ENCODE measurements at regions of chr3 and their contacts with region 1.

Region 1: GRCh38 chr3:39383045-39383880 is at the start of gene SLC25A38:
- DNase-seq: peak; percentile 85
- H3K4me3 ChIP-seq: peak within 1 kb of the TSS; percentile 56 to 81 (median 72)
- H3K27ac ChIP-seq: peak within 1 kb of the TSS; percentile 94 to 98 (median 96)
- H3K4me1 ChIP-seq: peaks cover 10 to 45% (median 25%) of the 10 kb centered on the region in 4 donors
- H3K27me3 ChIP-seq: no peaks in the 10 kb centered on the region
- CTCF ChIP-seq: peak; percentile 17 to 55 (median 41)
- EP300 ChIP-seq: no peak
- POLR2A ChIP-seq: peak; percentile 58
- total RNA-seq, gene SLC25A38: 10.5 to 61.7 (median 40.4) TPM

Region 2: GRCh38 chr3:39107388-39108199 is 275.7 kb before region 1 on chr3 and contains the starts of genes GORASP1 and TTC21A:
- in situ Hi-C with region 1: no loop called
- intact Hi-C with region 1: loop called (anchors 10 kb)
- DNase-seq: peak; percentile 91
- H3K4me3 ChIP-seq: peak within 1 kb of the TSS; percentile 73 to 95 (median 90)
- H3K27ac ChIP-seq: peak within 1 kb of the TSS; percentile 96 to 99 (median 97)
- H3K4me1 ChIP-seq: peaks cover 25 to 45% (median 35%) of the 10 kb centered on the region in 4 donors
- H3K27me3 ChIP-seq: no peaks in the 10 kb centered on the region
- CTCF ChIP-seq: no peak
- EP300 ChIP-seq: no peak
- POLR2A ChIP-seq: peak; percentile 74
- total RNA-seq, gene GORASP1: 86.8 to 135 (median 96.3) TPM
- total RNA-seq, gene TTC21A: 6.8 to 101 (median 30.3) TPM

Region 3: GRCh38 chr3:39180546-39181346 is 202.5 kb before region 1 on chr3:
- in situ Hi-C with region 1: loop called in 3 of 4 experiments (anchors 25 kb)
- intact Hi-C with region 1: loop called (anchors 1 kb)
- DNase-seq: peak; percentile 97
- H3K4me3 ChIP-seq: peak overlapping the region in 3 of 4 donors; percentile 24 to 42 (median 31)
- H3K27ac ChIP-seq: peak overlapping the region; percentile 79 to 94 (median 80)
- H3K4me1 ChIP-seq: peaks cover 20 to 43% (median 30%) of the 10 kb centered on the region in 4 donors
- H3K27me3 ChIP-seq: no peaks in the 10 kb centered on the region
- CTCF ChIP-seq: peak; percentile 27 to 60 (median 29)
- EP300 ChIP-seq: peak; percentile 72
- POLR2A ChIP-seq: peak; percentile 50

Region 4: DNA sequence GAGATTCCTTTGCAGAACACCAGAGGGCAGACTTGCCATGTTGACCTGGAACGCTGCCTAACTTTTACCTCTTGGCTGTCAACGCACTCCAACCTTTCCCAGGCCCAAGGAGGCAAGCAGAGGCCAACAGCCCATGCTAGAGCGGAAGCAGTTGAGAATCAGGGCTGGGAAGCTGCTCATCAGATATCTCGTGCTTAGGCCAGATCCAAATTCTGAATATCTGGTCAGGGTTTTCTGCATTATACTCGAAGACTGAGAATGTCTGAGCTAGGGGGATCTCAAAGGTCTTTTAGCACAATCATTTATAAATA is 193.3 kb before region 1 on chr3:
- in situ Hi-C with region 1: loop called in 3 of 4 experiments (anchors 25 kb)
- intact Hi-C with region 1: loop called (anchors 1 kb)
- DNase-seq: peak; percentile 74
- H3K4me3 ChIP-seq: no peak overlapping the region
- H3K27ac ChIP-seq: no peak overlapping the region
- H3K4me1 ChIP-seq: no peaks in the 10 kb centered on the region
- H3K27me3 ChIP-seq: no peaks in the 10 kb centered on the region
- CTCF ChIP-seq: peak; percentile 76 to 85 (median 81)
- EP300 ChIP-seq: no peak
- POLR2A ChIP-seq: no peak

Region 5: DNA sequence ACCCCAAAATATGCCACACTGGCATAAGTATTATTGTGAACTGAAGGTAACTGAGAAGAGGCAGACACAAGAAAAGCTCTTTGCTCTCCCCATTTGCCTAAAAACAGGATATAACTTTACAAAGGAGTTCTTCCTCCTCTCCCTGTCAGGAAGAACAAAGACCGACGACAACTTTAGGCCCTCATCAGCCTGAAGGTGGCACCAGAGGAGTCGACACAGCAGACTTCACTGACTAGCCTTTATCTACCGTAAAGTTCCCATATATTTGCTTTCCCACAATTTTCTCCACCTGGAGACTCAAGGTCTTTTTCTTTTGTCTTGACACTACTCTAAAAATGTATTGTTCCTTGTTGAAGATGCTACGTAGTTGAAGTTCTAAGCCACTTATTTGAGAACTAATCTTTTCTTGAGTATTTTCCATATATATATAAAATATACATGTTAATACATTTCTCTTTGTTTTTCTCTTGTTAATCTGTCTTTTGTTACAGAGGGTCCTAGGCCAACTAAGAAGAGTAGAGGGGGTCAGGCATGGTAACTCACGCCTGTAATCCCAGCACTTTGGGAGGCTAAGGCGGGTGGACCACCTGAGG is 174.7 kb before region 1 on chr3:
- in situ Hi-C with region 1: loop called in 1 of 4 experiments (anchors 25 kb)
- intact Hi-C with region 1: no loop called
- DNase-seq: peak; percentile 64
- H3K4me3 ChIP-seq: no peak overlapping the region
- H3K27ac ChIP-seq: no peak overlapping the region
- H3K4me1 ChIP-seq: peaks cover 0 to 6% (median 0%) of the 10 kb centered on the region in 4 donors
- H3K27me3 ChIP-seq: no peaks in the 10 kb centered on the region
- CTCF ChIP-seq: peak; percentile 40 to 58 (median 47)
- EP300 ChIP-seq: no peak
- POLR2A ChIP-seq: no peak

Region 6: GRCh38 chr3:39406368-39407258 is 23.4 kb after region 1 on chr3 and contains the start of gene RPSA:
- in situ Hi-C with region 1: no loop called
- intact Hi-C with region 1: loop called (anchors 2 kb)
- DNase-seq: peak; percentile 97
- H3K4me3 ChIP-seq: peak within 1 kb of the TSS; percentile 59 to 78 (median 74)
- H3K27ac ChIP-seq: peak within 1 kb of the TSS; percentile 82 to 92 (median 89)
- H3K4me1 ChIP-seq: peaks cover 6 to 41% (median 21%) of the 10 kb centered on the region in 4 donors
- H3K27me3 ChIP-seq: no peaks in the 10 kb centered on the region
- CTCF ChIP-seq: peak; percentile 14 to 49 (median 20)
- EP300 ChIP-seq: no peak
- POLR2A ChIP-seq: peak; percentile 98
- total RNA-seq, gene RPSA: 460 to 1,003 (median 843) TPM

Measured in transverse colon (tissue), 4 donors.